PC-9 (cell line): ENCODE measurements at regions of chr18 and their contacts with region 1.

Region 1: DNA sequence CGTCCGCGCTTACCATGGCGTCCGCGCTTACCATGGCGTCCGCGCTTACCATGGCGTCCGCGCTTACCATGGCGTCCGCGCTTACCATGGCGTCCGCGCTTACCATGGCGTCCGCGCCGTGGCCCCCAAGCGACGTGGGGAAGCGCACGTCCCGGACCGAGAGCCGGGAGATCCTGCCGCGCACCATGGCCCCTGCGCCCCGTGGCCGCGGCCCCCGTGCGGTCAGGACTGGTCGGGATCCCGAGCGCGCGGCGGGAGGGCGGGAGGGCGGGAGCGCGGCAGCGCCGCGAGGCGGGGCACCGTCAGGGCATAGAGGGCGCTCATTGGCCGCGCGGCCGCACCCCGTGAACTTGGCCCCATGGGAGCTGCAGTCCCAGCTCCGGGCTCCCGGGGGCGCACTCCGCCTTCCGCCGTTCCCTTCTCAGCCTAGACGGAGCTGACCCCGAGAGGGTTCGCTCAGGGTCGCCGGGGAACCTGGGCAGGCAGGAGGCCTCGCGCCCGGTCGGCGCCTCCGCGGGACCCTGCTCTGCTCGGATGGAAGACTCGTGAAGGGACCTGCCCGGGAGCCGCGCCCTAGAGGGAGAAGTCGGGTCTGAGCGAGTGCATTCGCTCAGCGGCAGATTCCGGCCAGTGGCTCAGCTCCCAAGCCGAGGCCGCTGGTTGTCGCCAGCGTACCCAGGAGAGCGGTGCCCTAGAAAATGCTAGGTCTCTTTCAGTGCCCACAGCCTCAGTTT is at the start of gene ENOSF1:
- DNase-seq: peak; percentile 54 to 97
- H3K4me3 ChIP-seq: peak within 1 kb of the TSS; percentile 92
- H3K27ac ChIP-seq: peak within 1 kb of the TSS; percentile 62
- H3K4me1 ChIP-seq: peaks cover 8% of the 10 kb centered on the region; the same call in 1 of the 2 replicates
- H3K27me3 ChIP-seq: no peaks in the 10 kb centered on the region
- CTCF ChIP-seq: peak; percentile 86
- total RNA-seq, gene ENOSF1: 48.7 and 60.6 TPM in 2 replicates

Region 2: DNA sequence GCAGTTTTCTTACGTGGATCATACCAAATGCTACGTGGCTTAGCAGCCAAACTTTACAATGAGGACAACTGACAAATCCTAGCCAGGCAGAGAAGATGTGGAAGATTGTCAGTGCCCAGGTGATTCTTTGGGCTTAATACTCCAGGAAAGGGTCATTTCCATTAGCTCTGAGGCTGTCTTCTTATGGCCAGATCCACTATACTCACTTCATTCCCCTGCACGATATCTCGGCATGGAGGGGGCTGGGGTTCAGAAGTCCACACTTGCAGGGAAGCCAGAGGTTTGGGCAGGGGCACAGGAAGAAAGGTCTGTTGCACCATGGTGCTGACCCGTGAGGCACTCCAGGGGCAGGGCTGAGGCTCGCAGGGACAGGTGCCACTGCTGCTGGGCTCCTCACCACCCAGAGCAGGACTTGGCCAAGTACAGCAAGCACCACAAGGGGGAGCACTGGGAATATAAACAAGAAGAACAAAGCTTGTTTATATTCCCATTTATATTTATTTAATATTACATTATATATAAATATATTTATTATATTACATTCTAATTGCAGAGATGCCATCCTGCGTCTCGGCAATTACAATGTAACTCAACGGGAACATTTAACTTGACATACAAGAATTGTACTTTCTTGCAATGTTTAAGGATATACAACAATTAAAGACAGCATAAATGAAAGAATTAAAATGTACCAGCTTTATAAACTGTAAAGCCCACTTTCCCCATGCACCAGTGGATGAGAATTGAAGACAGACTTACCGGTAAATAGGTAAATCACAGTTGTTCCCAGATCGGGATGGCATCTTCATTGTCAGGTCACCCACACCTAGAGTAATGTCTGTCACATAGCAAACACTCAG is 88.6 kb before region 1 on chr18:
- CTCF ChIA-PET with region 1: no interaction called
- POLR2A ChIA-PET with region 1: no interaction called
- intact Hi-C with region 1: loop called (anchors 10 kb)
- DNase-seq: peak; percentile 48 to 72
- H3K4me3 ChIP-seq: no peak overlapping the region
- H3K27ac ChIP-seq: no peak overlapping the region
- H3K4me1 ChIP-seq: no peaks in the 10 kb centered on the region
- H3K27me3 ChIP-seq: peaks cover 40% of the 10 kb centered on the region; the same call in 1 of the 2 replicates
- CTCF ChIP-seq: peak; percentile 72

Region 3: DNA sequence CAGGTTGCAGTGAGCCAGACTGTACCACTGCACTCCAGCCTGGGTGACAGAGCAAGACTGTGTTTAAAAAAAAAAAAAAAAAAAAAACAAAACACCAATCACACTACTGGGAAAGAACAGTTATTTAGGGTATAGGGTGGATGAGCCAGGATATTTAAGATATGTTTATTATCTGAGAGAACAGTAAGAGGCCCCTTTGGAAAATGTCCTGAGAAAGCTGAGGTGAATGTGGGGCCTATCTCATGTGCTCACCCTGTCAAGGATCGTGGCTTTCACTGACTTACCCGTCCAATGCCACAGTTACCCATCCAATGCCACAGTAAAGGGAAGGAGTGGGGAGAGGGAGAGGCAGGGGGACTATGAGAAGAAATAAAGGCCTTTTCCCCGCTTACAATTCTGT is 19.8 kb after region 1 on chr18:
- CTCF ChIA-PET with region 1: interaction called, 22 read pairs
- POLR2A ChIA-PET with region 1: no interaction called
- intact Hi-C with region 1: no loop called
- DNase-seq: no peak
- H3K4me3 ChIP-seq: no peak overlapping the region
- H3K27ac ChIP-seq: no peak overlapping the region
- H3K4me1 ChIP-seq: no peaks in the 10 kb centered on the region
- H3K27me3 ChIP-seq: no peaks in the 10 kb centered on the region
- CTCF ChIP-seq: no peak

Region 4: GRCh38 chr18:830315-830901 is 117.8 kb after region 1 on chr18:
- CTCF ChIA-PET with region 1: interaction called, 12 read pairs
- POLR2A ChIA-PET with region 1: interaction called, 7 read pairs
- intact Hi-C with region 1: loop called (anchors 10 kb)
- DNase-seq: no peak
- H3K4me3 ChIP-seq: no peak overlapping the region
- H3K27ac ChIP-seq: no peak overlapping the region
- H3K4me1 ChIP-seq: no peaks in the 10 kb centered on the region
- H3K27me3 ChIP-seq: no peaks in the 10 kb centered on the region
- CTCF ChIP-seq: no peak

Region 5: GRCh38 chr18:839224-840022 is 126.9 kb after region 1 on chr18:
- CTCF ChIA-PET with region 1: interaction called, 6 read pairs
- POLR2A ChIA-PET with region 1: no interaction called
- intact Hi-C with region 1: loop called (anchors 10 kb)
- DNase-seq: peak; percentile 49 to 76
- H3K4me3 ChIP-seq: no peak overlapping the region
- H3K27ac ChIP-seq: no peak overlapping the region
- H3K4me1 ChIP-seq: no peaks in the 10 kb centered on the region
- H3K27me3 ChIP-seq: no peaks in the 10 kb centered on the region
- CTCF ChIP-seq: peak; percentile 93